ENCODE measurements at regions of chr16 and their contacts with region 1.

Region 1: DNA sequence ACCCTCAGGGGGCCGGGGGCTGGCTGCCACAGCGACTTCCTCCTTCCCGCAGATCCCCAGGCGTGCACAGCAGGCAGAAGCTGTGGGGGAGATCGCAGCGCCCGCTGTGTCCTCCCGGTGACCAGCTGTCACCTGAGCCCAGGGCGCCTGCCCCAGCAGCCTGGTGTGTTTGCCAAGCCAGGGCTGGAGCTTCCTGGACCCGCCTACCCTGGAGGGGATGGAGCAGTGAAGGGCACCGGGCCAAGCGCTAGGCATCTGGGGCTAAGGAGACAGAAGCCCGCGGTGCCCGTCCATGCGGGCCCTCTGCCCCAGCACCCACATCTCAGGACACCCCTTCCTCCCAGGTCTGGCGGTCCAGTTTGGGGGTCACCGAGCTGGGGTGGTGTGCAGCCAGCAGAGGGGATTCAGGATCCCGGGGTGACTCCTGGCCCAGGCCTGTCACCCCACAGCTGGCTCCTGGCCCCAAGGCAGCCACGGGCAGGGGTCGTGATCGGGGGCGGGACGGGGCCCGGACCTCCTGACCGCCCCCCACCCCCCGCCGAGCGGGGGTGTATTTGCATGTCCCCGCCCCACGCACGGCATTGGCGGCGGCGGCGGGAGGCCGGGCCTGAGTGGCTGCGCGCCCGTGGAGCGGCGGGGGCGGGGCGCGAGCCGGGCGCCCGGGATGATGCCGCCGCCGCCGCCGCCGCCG is at the start of gene RAB26:
- DNase-seq: peak; percentile 92 to 93
- ATAC-seq: peak; percentile 80
- total RNA-seq, gene RAB26: 24.9 to 27.2 TPM

Region 2: GRCh38 chr16:2009789-2010510 is 138.2 kb before region 1 on chr16 and contains the start of gene ZNF598:
- intact Hi-C with region 1: loop called in 1 of 2 experiments (anchors 10 kb)
- DNase-seq: peak; percentile 79 to 87
- ATAC-seq: peak; percentile 82
- total RNA-seq, gene ZNF598: 45.8 to 52.8 TPM

Region 3: GRCh38 chr16:2027024-2028010 is 120.8 kb before region 1 on chr16:
- intact Hi-C with region 1: loop called in 1 of 2 experiments (anchors 5 kb)
- DNase-seq: peak in 1 of 2 donors; percentile 21
- ATAC-seq: peak; percentile 20

Region 4: DNA sequence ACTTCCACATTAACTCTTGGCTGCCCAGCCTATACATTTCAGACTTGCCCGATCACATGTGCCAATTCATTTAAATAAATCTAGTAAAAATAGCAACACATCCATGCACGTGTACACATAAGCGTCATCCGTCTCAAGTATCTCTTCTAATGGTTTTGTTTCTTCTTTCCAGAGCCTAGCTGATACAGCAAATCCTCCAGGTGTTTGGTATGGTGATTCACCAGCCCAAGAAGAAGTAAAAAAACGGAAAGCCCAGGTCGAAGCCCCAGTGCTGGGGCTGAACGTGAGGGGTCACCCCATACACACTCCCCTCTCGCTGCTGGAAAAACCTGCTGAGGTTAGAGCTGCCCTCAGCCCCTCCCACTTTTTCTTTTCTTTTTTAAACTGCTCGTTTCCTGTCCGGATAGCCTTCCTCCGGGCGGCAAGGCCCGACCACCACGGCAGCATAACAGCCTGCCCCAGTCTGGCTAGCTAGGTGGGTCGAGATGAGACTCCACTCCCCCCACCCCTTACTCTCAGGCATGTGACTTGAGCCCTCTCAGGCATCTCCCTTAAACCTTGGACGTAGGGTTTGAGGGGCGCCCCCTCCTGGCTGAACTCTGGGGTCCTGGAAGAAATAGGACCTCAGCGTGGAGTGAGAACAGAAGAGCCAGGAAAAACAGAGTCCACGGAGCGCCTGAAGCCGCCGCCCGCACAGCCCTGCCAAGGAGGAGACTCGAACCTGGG is 1025.9 kb after region 1 on chr16:
- intact Hi-C with region 1: no loop called
- DNase-seq: no peak
- ATAC-seq: no peak

Measured in left colon (tissue), 2 donors.